Naive thymus-derived CD4-positive, alpha-beta T cell (primary cell): ENCODE measurements at regions of chr19 and their contacts with region 1.

Region 1: DNA sequence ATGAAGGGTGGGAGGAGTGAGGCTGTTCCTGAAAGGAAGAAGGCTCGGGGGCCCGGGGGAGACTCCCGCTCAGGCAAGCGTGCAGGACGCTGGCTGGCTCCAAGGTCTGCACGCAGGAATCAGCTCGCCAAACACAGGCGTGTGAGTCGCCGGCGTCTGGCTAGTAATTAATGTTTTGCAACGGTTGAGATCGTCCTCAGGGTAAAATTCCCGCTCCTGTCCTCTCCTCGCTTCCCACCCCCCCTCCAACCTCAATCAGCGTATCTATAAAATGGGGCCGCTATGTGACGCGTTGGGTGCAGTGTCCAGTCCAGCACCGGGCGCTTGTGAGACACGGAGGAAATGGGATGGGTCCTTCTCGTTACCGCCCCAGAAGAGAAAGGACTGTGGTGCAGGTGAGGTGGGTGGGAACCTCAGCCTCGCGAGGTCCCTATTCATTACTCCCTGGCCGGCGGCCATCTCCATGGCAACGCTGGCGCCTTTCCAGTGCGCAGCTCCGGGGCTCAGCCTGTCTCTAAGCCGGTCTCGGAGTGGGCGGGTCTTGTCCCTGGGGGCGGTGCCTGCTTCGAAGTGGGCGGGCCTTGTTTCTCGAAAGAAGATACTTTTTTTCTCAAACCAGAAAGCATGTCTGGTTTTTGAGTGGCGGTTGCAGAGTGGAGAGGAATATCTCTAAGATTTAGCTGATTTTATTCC is 6.5 kb upstream of the ZNF579 start:
- DNase-seq: peak; percentile 83 to 92 (median 89)
- ATAC-seq: peak; percentile 99
- H3K4me3 ChIP-seq: peak overlapping the region; percentile 63
- H3K4me3 Mint-ChIP-seq: peak overlapping the region; percentile 83 to 95 (median 88)
- H3K27ac ChIP-seq: peak overlapping the region; percentile 32
- H3K27ac Mint-ChIP-seq: peak overlapping the region; percentile 16 to 88 (median 86)
- H3K4me1 ChIP-seq: peaks cover 10 to 22% of the 10 kb centered on the region in 2 donors
- H3K4me1 Mint-ChIP-seq: peaks cover 8 to 41% (median 27%) of the 10 kb centered on the region in 7 donors
- H3K27me3 ChIP-seq: no peaks in the 10 kb centered on the region
- H3K27me3 Mint-ChIP-seq: peaks cover 0 to 32% (median 0%) of the 10 kb centered on the region in 5 donors

Region 2: DNA sequence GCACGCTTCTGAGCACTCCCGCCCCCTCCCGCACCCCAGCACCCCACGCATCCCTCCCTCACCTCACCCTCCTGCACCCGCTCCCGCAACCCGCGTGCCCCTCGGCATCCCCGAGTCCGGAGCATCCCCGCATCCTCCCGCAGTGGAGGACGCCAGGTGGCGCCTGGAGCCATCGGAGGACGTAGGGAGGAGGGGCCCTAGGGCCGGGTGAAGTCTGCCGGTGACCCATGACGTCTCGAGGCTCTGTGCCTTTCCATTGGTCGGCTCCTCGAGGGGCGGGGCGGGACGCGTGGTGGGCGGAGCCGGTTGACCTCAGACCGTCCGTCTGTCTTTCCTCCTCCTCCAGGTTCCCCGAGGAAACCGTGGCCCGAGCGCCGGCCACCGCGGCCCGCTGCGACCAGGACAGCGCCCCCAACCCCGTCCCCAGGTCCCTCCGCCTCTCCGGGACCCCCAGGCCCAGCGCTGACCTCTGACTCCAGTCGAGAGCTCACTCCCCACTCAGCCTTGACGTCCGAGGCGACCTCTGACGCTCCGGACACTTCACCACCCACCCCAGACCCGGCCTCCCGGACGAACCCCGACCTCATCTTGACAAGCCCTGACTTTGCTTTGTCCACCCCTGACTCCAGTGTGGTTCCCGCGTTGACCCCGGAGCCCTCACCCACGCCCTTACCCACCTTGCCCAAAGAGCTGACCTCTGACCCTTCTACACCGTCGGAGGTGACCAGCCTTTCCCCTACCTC is 70.1 kb before region 1 on chr19:
- CTCF ChIA-PET with region 1: interaction called, 4 read pairs
- POLR2A ChIA-PET with region 1: no interaction called
- intact Hi-C with region 1: loop called in 1 of 2 experiments (anchors 5 kb)
- DNase-seq: peak; percentile 77 to 94 (median 85)
- ATAC-seq: peak; percentile 100
- H3K4me3 ChIP-seq: peak overlapping the region; percentile 48
- H3K4me3 Mint-ChIP-seq: peak overlapping the region; percentile 74 to 89 (median 84)
- H3K27ac ChIP-seq: peak overlapping the region; percentile 66
- H3K27ac Mint-ChIP-seq: peak overlapping the region in 8 of 9 donors; percentile 55 to 96 (median 83)
- H3K4me1 ChIP-seq: peaks cover 3 to 4% of the 10 kb centered on the region in 2 donors
- H3K4me1 Mint-ChIP-seq: peaks cover 0 to 4% (median 4%) of the 10 kb centered on the region in 7 donors
- H3K27me3 ChIP-seq: no peaks in the 10 kb centered on the region
- H3K27me3 Mint-ChIP-seq: peaks cover 0 to 4% (median 3%) of the 10 kb centered on the region in 5 donors

Region 3: GRCh38 chr19:56223481-56223880 is 636.4 kb after region 1 on chr19:
- CTCF ChIA-PET with region 1: no interaction called
- POLR2A ChIA-PET with region 1: no interaction called
- intact Hi-C with region 1: no loop called
- DNase-seq: no peak
- ATAC-seq: no peak
- H3K4me3 ChIP-seq: no peak overlapping the region
- H3K4me3 Mint-ChIP-seq: no peak overlapping the region
- H3K27ac ChIP-seq: no peak overlapping the region
- H3K27ac Mint-ChIP-seq: no peak overlapping the region
- H3K4me1 ChIP-seq: no peaks in the 10 kb centered on the region
- H3K4me1 Mint-ChIP-seq: peaks cover 0 to 3% (median 0%) of the 10 kb centered on the region in 7 donors
- H3K27me3 ChIP-seq: no peaks in the 10 kb centered on the region
- H3K27me3 Mint-ChIP-seq: peaks cover 0 to 6% (median 2%) of the 10 kb centered on the region in 5 donors